RWPE1 (cell line): ENCODE measurements at regions of chr4 and their contacts with region 1.

Region 1: DNA sequence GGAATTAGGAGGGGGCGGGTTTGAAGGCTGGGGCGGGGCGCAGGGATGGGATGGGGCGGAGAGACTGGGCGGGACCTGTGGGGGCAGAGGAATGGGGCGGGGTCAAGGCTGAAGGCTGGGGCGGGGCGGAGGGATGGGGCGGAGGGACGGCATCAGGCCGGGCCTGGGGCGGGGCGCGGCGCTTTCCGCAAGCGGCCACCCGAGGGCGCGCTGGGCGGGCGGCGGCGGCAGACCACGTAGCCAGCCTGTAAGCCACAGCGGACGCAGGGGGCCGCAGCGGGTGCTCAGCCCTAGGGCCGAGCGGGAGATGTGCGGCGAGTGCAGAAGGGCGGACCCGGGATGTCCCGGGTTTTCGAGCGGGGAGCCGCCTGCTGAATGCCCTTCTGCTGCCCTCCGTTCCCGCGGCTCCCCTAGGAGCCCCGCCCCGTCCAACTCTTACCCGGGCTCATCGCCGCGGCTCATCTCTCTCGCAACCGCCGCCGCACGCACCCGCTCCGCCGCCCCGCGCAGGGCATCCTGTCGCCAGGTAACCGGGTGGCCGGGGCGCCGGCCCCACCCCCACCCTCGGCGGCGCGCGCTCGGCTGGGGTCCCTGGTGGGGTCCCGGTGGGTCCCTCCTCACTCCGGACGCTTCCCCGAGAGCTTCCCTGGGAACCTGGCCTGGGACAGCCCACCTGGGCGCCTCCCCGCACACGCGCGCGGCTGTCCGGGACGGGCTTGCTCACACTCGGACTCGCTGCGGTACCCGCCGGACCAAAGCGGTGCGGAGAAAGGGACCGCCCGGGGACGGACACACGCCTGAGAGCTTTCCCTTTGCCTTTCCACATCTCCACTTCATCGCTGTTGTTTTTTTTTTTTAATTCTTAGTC is at the start of gene CCDC110:
- DNase-seq: peak; percentile 97
- H3K27ac ChIP-seq: no peak within 1 kb of the TSS
- CTCF ChIP-seq: peak; percentile 69

Region 2: DNA sequence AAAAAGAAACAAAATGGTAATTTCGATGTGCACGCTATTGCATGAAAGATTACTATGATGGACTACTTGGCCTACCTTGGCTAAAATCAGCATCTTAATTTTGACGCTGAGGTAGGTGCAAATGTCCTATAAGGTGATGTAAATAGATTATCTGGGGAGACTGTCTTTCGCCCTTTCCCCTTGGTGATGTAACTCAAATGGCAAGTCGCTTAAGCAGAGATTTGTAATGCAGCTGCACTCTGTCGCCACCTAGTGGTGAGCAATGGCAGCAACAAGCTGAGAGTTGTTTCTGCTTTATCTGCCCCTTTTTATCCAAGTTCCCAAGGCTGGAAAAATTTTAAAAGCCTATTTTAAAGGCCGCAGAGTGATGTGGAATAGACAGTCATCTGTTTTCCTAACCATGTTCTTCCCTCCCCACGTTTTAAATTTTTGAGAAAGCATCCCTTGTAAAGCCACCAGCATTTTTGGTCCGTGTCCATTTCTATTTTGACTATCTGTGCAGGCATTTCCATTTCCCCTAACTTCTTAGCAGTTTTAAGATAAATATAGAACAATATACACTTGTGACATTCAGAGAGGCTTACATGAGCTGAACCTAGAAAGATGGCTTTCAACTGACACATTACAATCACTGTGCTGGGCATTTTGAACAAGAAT is 126.2 kb after region 1 on chr4:
- CTCF ChIA-PET with region 1: interaction called, 29 read pairs
- POLR2A ChIA-PET with region 1: no interaction called
- DNase-seq: peak; percentile 59
- H3K27ac ChIP-seq: no peak overlapping the region
- CTCF ChIP-seq: peak; percentile 99